ENCODE measurements at regions of chr19 and their contacts with region 1.

Region 1: DNA sequence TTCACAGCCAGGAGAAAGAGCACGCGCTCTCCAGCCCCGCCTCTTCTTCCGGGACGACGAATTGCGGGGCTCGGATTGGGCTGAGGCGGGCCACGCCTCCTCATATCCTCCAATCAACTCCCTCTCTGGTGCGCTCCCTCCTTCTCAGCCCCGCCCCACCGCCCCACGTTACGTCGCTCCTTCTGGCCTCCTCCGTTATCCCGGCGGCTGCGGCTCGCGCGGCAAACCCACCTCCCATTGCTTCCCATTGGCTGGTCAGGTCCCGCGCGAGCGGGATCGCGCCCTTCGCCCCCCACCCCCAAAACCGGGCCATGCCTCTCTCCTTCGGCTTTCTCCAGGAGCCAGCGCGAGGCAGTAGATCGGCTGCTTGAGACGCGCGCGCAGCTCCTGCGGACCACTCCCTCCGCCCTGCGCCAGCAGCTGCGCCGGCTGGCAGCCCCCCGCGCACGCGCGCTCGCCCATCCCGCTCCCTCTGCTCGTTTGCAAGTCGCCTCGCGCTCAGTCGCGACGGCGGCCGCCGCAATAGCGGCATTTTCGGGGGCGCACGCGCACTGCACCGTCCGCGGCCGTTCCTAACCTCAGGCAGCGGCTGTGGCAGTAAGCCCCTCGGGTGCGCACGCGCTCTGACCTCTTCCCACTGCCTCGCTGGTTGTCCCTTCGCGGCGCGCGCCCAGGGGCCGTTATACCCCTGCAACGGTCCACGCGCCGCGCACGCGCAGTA is 512 bp upstream of the ARHGAP35 start:
- DNase-seq: peak; percentile 99
- H3K4me3 ChIP-seq: peak overlapping the region; percentile 92 to 95 (median 94)
- H3K27ac ChIP-seq: peak overlapping the region; percentile 99 to 100 (median 100)
- H3K4me1 ChIP-seq: peaks cover 38 to 70% (median 64%) of the 10 kb centered on the region in 4 donors
- H3K27me3 ChIP-seq: no peaks in the 10 kb centered on the region
- CTCF ChIP-seq: peak in 1 of 3 experiments; percentile 10
- EP300 ChIP-seq: no peak
- POLR2A ChIP-seq: peak; percentile 48

Region 2: GRCh38 chr19:46924874-46925547 is 64.7 kb after region 1 on chr19:
- intact Hi-C with region 1: loop called (anchors 5 kb)
- DNase-seq: no peak
- H3K4me3 ChIP-seq: no peak overlapping the region
- H3K27ac ChIP-seq: peak overlapping the region; percentile 19 to 55 (median 38)
- H3K4me1 ChIP-seq: peaks cover 56 to 72% (median 62%) of the 10 kb centered on the region in 4 donors
- H3K27me3 ChIP-seq: no peaks in the 10 kb centered on the region
- CTCF ChIP-seq: no peak
- EP300 ChIP-seq: no peak
- POLR2A ChIP-seq: no peak

Region 3: DNA sequence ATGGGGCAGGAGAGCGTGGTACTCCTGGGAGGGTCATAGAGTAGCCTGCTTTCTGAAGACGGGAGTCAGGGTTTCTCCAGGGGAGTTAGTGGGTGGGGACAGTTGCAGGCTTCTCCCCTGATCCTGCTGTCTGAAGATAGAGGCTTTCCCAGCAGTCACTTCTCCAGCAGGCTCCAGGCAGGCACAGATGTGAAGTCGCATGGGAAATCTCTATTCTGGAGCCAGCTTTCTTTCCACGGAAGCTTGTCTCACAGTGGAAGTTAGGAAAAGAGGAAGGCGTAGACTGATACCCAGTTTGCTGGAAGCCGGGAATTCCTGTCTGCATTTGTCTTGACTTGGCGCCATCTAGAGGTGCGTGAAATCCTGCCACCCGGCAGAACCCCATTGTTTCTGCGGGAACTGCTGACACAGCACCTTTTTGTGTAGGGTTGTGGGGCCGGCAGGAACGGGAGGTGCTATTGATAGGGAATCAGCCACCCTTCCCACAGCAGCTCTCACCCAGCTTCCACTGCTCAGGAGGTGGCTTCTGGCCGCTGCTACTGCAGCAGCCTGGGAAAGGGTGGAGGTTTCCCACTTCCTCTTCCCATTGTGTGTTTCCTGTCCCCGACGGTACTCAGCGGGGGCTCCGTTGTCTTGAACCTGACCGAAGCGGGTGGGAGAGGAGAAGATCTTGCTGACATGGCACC is 130.8 kb after region 1 on chr19:
- intact Hi-C with region 1: loop called (anchors 2 kb)
- DNase-seq: peak; percentile 94
- H3K4me3 ChIP-seq: no peak overlapping the region
- H3K27ac ChIP-seq: peak overlapping the region; percentile 45 to 77 (median 52)
- H3K4me1 ChIP-seq: peaks cover 20 to 51% (median 25%) of the 10 kb centered on the region in 4 donors
- H3K27me3 ChIP-seq: no peaks in the 10 kb centered on the region
- CTCF ChIP-seq: peak; percentile 87 to 92 (median 88)
- EP300 ChIP-seq: no peak
- POLR2A ChIP-seq: no peak

Region 4: GRCh38 chr19:47190167-47190727 is 330.0 kb after region 1 on chr19:
- intact Hi-C with region 1: no loop called
- DNase-seq: no peak
- H3K4me3 ChIP-seq: peak overlapping the region; percentile 1 to 10 (median 5)
- H3K27ac ChIP-seq: peak overlapping the region; percentile 74 to 83 (median 80)
- H3K4me1 ChIP-seq: peaks cover 23 to 58% (median 52%) of the 10 kb centered on the region in 4 donors
- H3K27me3 ChIP-seq: no peaks in the 10 kb centered on the region
- CTCF ChIP-seq: no peak
- EP300 ChIP-seq: no peak
- POLR2A ChIP-seq: no peak

Measured in esophagus muscularis mucosa (tissue), 4 donors.